ENCODE measurements at regions of chr9 and their contacts with region 1.

Region 1: DNA sequence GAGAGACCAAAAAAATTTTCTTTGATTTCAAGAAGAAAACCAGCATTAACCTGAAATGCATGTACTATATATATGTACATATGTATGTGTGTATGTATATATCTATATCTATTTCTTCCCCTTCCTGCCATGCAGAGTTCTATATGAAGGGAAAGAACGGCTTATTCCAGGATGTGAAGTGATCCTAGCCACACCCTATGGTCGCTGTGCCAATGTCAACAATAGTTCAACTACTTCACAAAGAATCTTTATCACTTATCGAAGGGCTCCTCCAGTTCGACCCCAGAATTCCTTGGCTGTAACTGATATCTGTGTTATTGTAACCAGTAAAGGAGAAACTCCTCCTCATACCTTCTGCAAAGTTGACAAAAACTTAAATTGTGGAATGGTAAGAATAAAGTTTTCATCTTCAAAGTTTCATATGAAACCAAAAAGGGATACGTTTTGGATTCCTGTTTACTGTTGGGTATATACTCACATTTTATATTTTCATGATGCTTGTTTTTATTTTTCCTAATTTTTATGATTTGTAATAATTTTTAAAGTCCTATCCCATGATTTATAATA is 56.2 kb downstream of the DENND4C start:
- DNase-seq: no peak
- ATAC-seq: no peak
- H3K4me3 ChIP-seq: no peak overlapping the region
- H3K4me3 Mint-ChIP-seq: no peak overlapping the region
- H3K27ac ChIP-seq: no peak overlapping the region
- H3K27ac Mint-ChIP-seq: no peak overlapping the region
- H3K4me1 ChIP-seq: no peaks in the 10 kb centered on the region
- H3K4me1 Mint-ChIP-seq: peaks cover 34% of the 10 kb centered on the region
- H3K27me3 ChIP-seq: no peaks in the 10 kb centered on the region
- H3K27me3 Mint-ChIP-seq: no peaks in the 10 kb centered on the region
- CTCF ChIP-seq: no peak

Region 2: GRCh38 chr9:18947772-18948391 is 338.8 kb before region 1 on chr9:
- CTCF ChIA-PET with region 1: no interaction called
- POLR2A ChIA-PET with region 1: no interaction called
- intact Hi-C with region 1: no loop called
- DNase-seq: no peak
- ATAC-seq: no peak
- H3K4me3 ChIP-seq: no peak overlapping the region
- H3K4me3 Mint-ChIP-seq: no peak overlapping the region
- H3K27ac ChIP-seq: no peak overlapping the region
- H3K27ac Mint-ChIP-seq: no peak overlapping the region
- H3K4me1 ChIP-seq: no peaks in the 10 kb centered on the region
- H3K4me1 Mint-ChIP-seq: no peaks in the 10 kb centered on the region
- H3K27me3 ChIP-seq: no peaks in the 10 kb centered on the region
- H3K27me3 Mint-ChIP-seq: peaks cover 4% of the 10 kb centered on the region
- CTCF ChIP-seq: no peak

Region 3: DNA sequence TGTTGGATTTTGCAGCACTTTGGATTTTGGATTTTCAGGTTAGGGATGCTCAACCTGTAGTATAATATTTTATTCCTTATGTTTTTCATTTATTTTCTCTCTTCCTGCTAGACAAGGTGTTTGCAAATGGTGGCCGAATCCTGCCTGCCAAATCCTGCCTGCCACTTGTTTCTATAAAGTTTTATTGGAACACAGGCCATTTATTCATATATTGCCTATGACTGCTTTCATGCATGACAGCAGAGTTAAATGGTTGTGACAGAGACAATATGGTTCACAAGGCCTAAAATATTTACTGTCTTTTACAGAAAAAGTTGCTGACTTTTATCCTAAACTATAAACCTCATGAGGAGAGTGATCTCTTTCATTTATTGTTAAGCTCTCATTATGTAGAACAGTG is 16.5 kb after region 1 on chr9:
- CTCF ChIA-PET with region 1: no interaction called
- POLR2A ChIA-PET with region 1: no interaction called
- intact Hi-C with region 1: loop called in 1 of 2 experiments (anchors 2 kb)
- DNase-seq: no peak
- ATAC-seq: no peak
- H3K4me3 ChIP-seq: no peak overlapping the region
- H3K4me3 Mint-ChIP-seq: no peak overlapping the region
- H3K27ac ChIP-seq: no peak overlapping the region
- H3K27ac Mint-ChIP-seq: peak overlapping the region; percentile 29
- H3K4me1 ChIP-seq: no peaks in the 10 kb centered on the region
- H3K4me1 Mint-ChIP-seq: peaks cover 2% of the 10 kb centered on the region
- H3K27me3 ChIP-seq: no peaks in the 10 kb centered on the region
- H3K27me3 Mint-ChIP-seq: no peaks in the 10 kb centered on the region
- CTCF ChIP-seq: no peak